ENCODE measurements at regions of chr5 and their contacts with region 1.

Region 1: GRCh38 chr5:75630875-75631274 is 19.6 kb downstream of the ANKDD1B start:
- DNase-seq: no peak
- ATAC-seq: no peak
- H3K4me3 ChIP-seq: no peak overlapping the region
- H3K27ac ChIP-seq: no peak overlapping the region
- H3K4me1 ChIP-seq: no peaks in the 10 kb centered on the region
- H3K27me3 ChIP-seq: no peaks in the 10 kb centered on the region
- CTCF ChIP-seq: no peak
- EP300 ChIP-seq: no peak
- POLR2A ChIP-seq: no peak
- RAD21 ChIP-seq: no peak

Region 2: GRCh38 chr5:75588666-75589065 is 42.2 kb before region 1 on chr5:
- CTCF ChIA-PET with region 1: no interaction called
- POLR2A ChIA-PET with region 1: no interaction called
- in situ Hi-C with region 1: no loop called
- intact Hi-C with region 1: no loop called
- DNase-seq: no peak
- ATAC-seq: no peak
- H3K4me3 ChIP-seq: no peak overlapping the region
- H3K27ac ChIP-seq: no peak overlapping the region
- H3K4me1 ChIP-seq: no peaks in the 10 kb centered on the region
- H3K27me3 ChIP-seq: no peaks in the 10 kb centered on the region
- CTCF ChIP-seq: no peak
- EP300 ChIP-seq: no peak
- POLR2A ChIP-seq: no peak
- RAD21 ChIP-seq: no peak

Region 3: GRCh38 chr5:75612901-75613300 is 18.0 kb before region 1 on chr5:
- CTCF ChIA-PET with region 1: no interaction called
- POLR2A ChIA-PET with region 1: no interaction called
- in situ Hi-C with region 1: no loop called
- intact Hi-C with region 1: loop called (anchors 1 kb)
- DNase-seq: no peak
- ATAC-seq: no peak
- H3K4me3 ChIP-seq: no peak overlapping the region
- H3K27ac ChIP-seq: no peak overlapping the region
- H3K4me1 ChIP-seq: peaks cover 5% of the 10 kb centered on the region; the same call in 1 of the 2 replicates
- H3K27me3 ChIP-seq: no peaks in the 10 kb centered on the region; a peak in 1 of 5 replicates
- CTCF ChIP-seq: no peak
- EP300 ChIP-seq: no peak
- POLR2A ChIP-seq: no peak
- RAD21 ChIP-seq: no peak

Region 4: GRCh38 chr5:75656311-75657003 is 25.6 kb after region 1 on chr5:
- CTCF ChIA-PET with region 1: no interaction called
- POLR2A ChIA-PET with region 1: no interaction called
- in situ Hi-C with region 1: no loop called
- intact Hi-C with region 1: no loop called
- DNase-seq: no peak
- ATAC-seq: peak; percentile 81
- H3K4me3 ChIP-seq: peak overlapping the region in 2 of 3 experiments; percentile 35 to 40; a peak in 2 of 6 replicates
- H3K27ac ChIP-seq: no peak overlapping the region
- H3K4me1 ChIP-seq: no peaks in the 10 kb centered on the region
- H3K27me3 ChIP-seq: peaks cover 0 to 16% of the 10 kb centered on the region in 2 experiments; a peak in 1 of 5 replicates
- CTCF ChIP-seq: no peak
- EP300 ChIP-seq: no peak
- POLR2A ChIP-seq: no peak
- RAD21 ChIP-seq: no peak

Measured in HepG2 (cell line).